ENCODE measurements at regions of chr12 and their contacts with region 1.

Region 1: DNA sequence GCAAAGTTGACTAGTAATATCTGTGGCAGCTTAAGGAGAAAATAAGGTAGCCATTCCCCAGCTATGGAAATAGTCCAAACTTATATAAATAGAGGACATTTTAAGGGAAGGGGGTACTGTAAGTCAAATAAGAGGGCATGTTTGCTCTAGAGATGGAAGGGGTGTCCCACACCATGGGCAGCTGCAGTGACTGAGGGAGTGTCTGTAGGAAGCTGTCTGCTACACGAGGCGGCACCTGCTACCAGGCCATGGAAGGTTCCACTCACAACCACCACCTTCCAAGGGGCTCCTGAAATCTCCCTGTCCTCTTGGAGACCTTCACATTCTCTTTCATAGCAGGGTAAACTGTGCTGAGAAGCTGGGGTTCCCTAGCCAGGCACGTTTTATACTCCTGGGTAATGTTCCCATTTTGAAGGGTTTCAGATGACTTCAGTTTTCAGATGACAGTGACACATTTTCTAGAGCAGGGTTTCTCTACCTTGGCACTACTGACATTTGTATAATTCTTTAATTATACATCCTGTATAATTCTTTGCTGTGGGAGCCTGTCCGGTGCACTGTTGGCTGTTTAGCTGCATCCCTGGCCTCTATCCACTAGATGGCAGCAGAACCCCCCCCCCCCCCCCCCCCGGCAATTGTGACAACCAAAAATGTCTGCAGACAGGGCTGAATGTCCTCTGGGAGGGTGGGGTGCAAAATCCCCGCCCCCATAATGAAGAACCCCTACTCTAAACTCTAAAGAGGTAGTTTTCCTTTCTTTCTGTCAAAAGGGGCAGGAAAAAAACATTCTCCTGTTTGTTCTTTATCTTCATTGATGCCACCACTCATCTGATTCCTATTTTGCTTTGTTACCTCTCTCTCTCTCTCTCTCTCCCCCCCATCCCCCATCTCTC is 11.6 kb upstream of the SMCO2 start:
- DNase-seq: no peak
- ATAC-seq: peak; percentile 52 to 55
- H3K4me3 ChIP-seq: no peak overlapping the region
- H3K27ac ChIP-seq: no peak overlapping the region
- H3K4me1 ChIP-seq: peaks cover 0 to 4% of the 10 kb centered on the region in 2 donors
- H3K27me3 ChIP-seq: no peaks in the 10 kb centered on the region
- CTCF ChIP-seq: peak in 4 of 5 experiments; percentile 40 to 81 (median 42)
- POLR2A ChIP-seq: no peak

Region 2: DNA sequence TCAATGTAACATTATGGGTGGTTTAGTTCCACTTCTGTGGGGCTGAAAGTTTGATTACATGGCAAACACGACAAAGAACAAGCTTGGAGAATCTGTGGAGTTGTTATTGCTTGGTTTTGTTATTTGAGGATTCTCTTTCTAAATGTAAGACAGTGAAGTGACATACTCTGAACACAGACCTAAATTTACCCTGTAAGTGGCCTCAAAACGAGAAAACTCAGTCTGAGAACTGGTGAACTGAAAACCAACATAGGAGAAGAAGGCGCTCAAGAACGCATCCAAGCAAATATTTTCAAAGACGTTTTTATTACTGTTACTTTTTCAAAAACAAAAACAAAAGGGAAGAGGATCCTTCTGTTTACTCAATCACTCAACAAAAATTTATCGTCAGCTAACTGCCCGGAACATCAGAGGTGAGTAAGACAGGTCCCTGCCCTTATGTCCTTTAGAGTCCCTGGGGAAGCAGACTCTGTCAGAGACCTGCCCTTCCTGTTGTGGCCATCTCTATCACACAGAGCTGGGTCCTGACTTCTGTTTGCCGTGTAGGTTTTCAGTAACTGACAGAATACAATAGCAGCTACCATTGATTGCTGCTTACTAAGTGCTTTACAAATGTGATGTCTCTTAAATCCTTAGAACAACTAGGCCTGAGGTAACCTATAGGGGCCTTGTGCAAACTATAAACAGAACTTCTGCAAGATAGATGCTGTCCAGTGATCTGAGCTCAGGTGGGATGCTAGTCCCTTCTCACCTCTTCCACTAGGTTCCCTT is 273.3 kb before region 1 on chr12:
- in situ Hi-C with region 1: no loop called
- intact Hi-C with region 1: no loop called
- DNase-seq: no peak
- ATAC-seq: no peak
- H3K4me3 ChIP-seq: no peak overlapping the region
- H3K27ac ChIP-seq: no peak overlapping the region
- H3K4me1 ChIP-seq: peaks cover 0 to 7% of the 10 kb centered on the region in 2 donors
- H3K27me3 ChIP-seq: no peaks in the 10 kb centered on the region
- CTCF ChIP-seq: no peak
- POLR2A ChIP-seq: no peak

Region 3: GRCh38 chr12:27523642-27524493 is 88.9 kb after region 1 on chr12 and contains the start of gene PPFIBP1:
- in situ Hi-C with region 1: no loop called
- intact Hi-C with region 1: loop called (anchors 5 kb)
- DNase-seq: peak; percentile 96 to 99
- ATAC-seq: peak; percentile 94 to 96
- H3K4me3 ChIP-seq: peak within 1 kb of the TSS; percentile 64 to 85 (median 74)
- H3K27ac ChIP-seq: peak within 1 kb of the TSS; percentile 83 to 90 (median 87)
- H3K4me1 ChIP-seq: peaks cover 12 to 16% of the 10 kb centered on the region in 2 donors
- H3K27me3 ChIP-seq: no peaks in the 10 kb centered on the region
- CTCF ChIP-seq: peak in 2 of 5 experiments; percentile 32 to 51
- POLR2A ChIP-seq: peak; percentile 76 to 88
- total RNA-seq, gene PPFIBP1: 18.3 to 33.2 (median 27.4) TPM

Region 4: DNA sequence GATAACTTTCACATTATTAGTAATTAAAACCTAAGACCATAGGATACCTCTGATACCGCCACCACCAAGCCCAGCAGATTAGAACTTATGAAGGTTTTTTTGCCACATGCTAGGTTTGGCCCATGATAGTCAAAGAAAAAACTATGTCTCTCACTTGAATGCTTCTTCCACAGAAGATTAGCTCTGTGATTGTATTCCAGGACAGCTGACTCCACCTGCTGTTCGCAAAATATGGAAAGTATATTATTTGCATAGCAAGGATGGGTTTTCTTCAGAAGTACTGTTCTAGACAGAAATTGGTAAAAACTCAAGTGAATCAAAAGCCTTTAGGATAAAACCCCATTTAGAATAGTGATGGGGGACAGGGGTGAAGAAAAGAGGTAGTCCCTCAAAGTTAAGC is 131.2 kb after region 1 on chr12:
- in situ Hi-C with region 1: no loop called
- intact Hi-C with region 1: loop called (anchors 2 kb)
- DNase-seq: no peak
- ATAC-seq: no peak
- H3K4me3 ChIP-seq: no peak overlapping the region
- H3K27ac ChIP-seq: no peak overlapping the region
- H3K4me1 ChIP-seq: peaks cover 4 to 28% of the 10 kb centered on the region in 2 donors
- H3K27me3 ChIP-seq: no peaks in the 10 kb centered on the region
- CTCF ChIP-seq: peak in 2 of 5 experiments; percentile 13 to 24
- POLR2A ChIP-seq: no peak

Region 5: GRCh38 chr12:27635349-27635972 is 200.5 kb after region 1 on chr12:
- in situ Hi-C with region 1: loop called in 2 of 4 experiments (anchors 10 kb)
- intact Hi-C with region 1: no loop called
- DNase-seq: no peak
- ATAC-seq: peak in 1 of 2 donors; percentile 49
- H3K4me3 ChIP-seq: no peak overlapping the region
- H3K27ac ChIP-seq: no peak overlapping the region
- H3K4me1 ChIP-seq: no peaks in the 10 kb centered on the region
- H3K27me3 ChIP-seq: no peaks in the 10 kb centered on the region
- CTCF ChIP-seq: peak; percentile 43 to 63 (median 55)
- POLR2A ChIP-seq: no peak

Region 6: GRCh38 chr12:27644158-27644845 is 209.4 kb after region 1 on chr12:
- in situ Hi-C with region 1: loop called in 2 of 4 experiments (anchors 10 kb)
- intact Hi-C with region 1: no loop called
- DNase-seq: no peak
- ATAC-seq: no peak
- H3K4me3 ChIP-seq: no peak overlapping the region
- H3K27ac ChIP-seq: no peak overlapping the region
- H3K4me1 ChIP-seq: no peaks in the 10 kb centered on the region
- H3K27me3 ChIP-seq: no peaks in the 10 kb centered on the region
- CTCF ChIP-seq: no peak
- POLR2A ChIP-seq: no peak

Region 7: GRCh38 chr12:27652174-27652763 is 217.3 kb after region 1 on chr12:
- in situ Hi-C with region 1: loop called in 3 of 4 experiments (anchors 5 to 10 kb)
- intact Hi-C with region 1: loop called (anchors 1 kb)
- DNase-seq: peak in 1 of 2 donors; percentile 41
- ATAC-seq: peak; percentile 75 to 92
- H3K4me3 ChIP-seq: no peak overlapping the region
- H3K27ac ChIP-seq: no peak overlapping the region
- H3K4me1 ChIP-seq: no peaks in the 10 kb centered on the region
- H3K27me3 ChIP-seq: no peaks in the 10 kb centered on the region
- CTCF ChIP-seq: peak; percentile 69 to 89 (median 70)
- POLR2A ChIP-seq: no peak

Region 8: GRCh38 chr12:27657296-27657695 is 222.4 kb after region 1 on chr12:
- in situ Hi-C with region 1: loop called in 2 of 4 experiments (anchors 5 to 10 kb)
- intact Hi-C with region 1: loop called (anchors 1 kb)
- DNase-seq: no peak
- ATAC-seq: no peak
- H3K4me3 ChIP-seq: no peak overlapping the region
- H3K27ac ChIP-seq: no peak overlapping the region
- H3K4me1 ChIP-seq: no peaks in the 10 kb centered on the region
- H3K27me3 ChIP-seq: no peaks in the 10 kb centered on the region
- CTCF ChIP-seq: no peak
- POLR2A ChIP-seq: no peak

Region 9: GRCh38 chr12:27673101-27673718 is 238.3 kb after region 1 on chr12:
- in situ Hi-C with region 1: no loop called
- intact Hi-C with region 1: no loop called
- DNase-seq: no peak
- ATAC-seq: peak; percentile 30 to 50
- H3K4me3 ChIP-seq: no peak overlapping the region
- H3K27ac ChIP-seq: peak overlapping the region; percentile 14 to 55 (median 50)
- H3K4me1 ChIP-seq: peaks cover 12 to 17% of the 10 kb centered on the region in 2 donors
- H3K27me3 ChIP-seq: no peaks in the 10 kb centered on the region
- CTCF ChIP-seq: no peak
- POLR2A ChIP-seq: no peak

Measured in gastrocnemius medialis (tissue), 4 donors.